BJ (cell line): ENCODE measurements at regions of chr3 and their contacts with region 1.

Region 1: DNA sequence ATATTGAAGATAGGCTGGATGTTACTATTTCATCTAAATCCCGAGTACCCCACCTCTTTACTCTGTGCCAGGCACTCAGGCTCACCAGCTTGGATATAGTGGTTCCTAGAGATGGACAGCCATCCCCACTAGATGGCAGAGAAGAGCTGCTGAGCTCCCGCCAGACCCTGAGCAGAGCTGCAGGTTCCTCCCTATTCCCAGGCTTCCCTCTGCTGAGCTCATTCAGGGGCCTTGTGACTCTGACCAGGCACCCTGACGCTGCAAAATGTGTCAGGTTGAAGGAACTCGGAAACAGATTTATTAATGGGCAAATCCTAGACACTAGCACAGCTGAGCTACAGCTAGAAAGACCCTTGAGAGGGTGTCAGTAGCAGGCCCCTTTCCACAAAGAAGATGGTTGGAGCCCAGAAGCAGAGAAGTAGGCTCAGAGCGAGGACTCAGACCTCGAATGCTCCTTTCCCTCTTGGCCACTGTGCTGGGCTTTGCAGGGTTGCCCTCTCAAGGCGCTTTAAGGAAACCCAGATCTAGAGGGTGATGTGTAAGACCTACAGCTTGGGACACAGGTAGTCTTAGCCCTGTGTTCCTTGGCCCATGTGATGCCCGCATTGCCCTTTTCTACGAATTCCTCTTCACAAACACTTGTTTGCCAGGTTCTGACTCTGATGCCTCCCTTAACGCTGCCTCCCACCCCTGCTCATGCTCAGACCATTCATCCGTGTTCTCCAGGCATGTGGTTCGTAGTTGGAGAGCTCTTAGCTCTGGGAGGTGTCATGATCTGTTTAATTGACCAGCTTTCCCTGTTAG is 38.0 kb upstream of the RHO start:
- DNase-seq: peak; percentile 74
- H3K4me3 ChIP-seq: no peak overlapping the region
- H3K27me3 ChIP-seq: no peaks in the 10 kb centered on the region
- CTCF ChIP-seq: peak; percentile 92

Region 2: GRCh38 chr3:129560901-129561594 is 70.6 kb after region 1 on chr3:
- CTCF ChIA-PET with region 1: interaction called, 12 read pairs
- POLR2A ChIA-PET with region 1: no interaction called
- DNase-seq: peak; percentile 68
- H3K4me3 ChIP-seq: peak overlapping the region; percentile 29
- H3K27me3 ChIP-seq: no peaks in the 10 kb centered on the region
- CTCF ChIP-seq: no peak

Region 3: DNA sequence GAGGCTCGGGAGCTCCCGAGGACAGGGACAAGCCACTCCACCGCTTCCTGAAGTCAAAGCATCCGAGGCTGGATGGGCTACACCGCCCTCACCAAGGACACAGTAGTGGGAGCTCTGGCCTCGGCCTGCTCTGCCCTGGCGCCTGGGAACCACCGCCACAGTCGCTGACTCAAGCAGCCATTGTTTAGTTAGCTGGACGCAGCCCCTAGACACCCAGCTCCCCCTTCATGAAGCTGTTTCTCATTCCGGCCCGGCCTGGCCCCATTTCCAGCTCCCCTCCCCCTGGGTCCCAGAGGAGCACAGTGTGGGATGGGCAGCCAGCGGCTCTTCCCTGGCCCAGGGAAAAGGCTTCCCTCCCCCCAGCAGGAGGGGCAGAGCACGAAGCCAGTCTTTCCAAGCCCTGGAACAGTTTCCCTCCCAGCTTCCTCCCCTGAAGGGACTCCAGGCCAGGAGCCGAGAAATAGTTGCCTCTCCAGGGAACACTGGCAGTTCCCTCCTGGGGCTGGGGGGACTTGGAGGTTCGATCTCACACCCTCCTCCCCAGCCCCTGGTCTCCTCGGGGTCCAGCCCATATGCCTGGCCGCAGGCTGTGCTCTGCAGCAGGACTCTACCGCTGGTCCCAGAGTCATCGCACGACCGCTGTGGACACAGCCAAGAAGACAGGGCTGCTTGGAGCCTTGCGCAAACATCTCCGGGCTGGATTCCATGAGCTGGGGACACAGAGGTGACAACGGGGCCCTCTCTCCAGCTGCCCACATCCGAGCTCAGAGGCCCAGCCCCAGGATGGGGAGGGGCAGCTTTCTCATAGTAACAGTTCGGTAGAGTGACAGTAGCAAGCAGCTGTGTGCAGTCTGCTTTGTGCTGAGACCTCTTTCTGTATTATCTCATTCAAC is 106.0 kb after region 1 on chr3:
- CTCF ChIA-PET with region 1: interaction called, 24 read pairs
- POLR2A ChIA-PET with region 1: interaction called, 3 read pairs
- DNase-seq: peak; percentile 88
- H3K4me3 ChIP-seq: peak overlapping the region; percentile 20; the same call in 1 of the 2 replicates
- H3K27me3 ChIP-seq: no peaks in the 10 kb centered on the region
- CTCF ChIP-seq: peak; percentile 6; the same call in 1 of the 2 replicates

Region 4: DNA sequence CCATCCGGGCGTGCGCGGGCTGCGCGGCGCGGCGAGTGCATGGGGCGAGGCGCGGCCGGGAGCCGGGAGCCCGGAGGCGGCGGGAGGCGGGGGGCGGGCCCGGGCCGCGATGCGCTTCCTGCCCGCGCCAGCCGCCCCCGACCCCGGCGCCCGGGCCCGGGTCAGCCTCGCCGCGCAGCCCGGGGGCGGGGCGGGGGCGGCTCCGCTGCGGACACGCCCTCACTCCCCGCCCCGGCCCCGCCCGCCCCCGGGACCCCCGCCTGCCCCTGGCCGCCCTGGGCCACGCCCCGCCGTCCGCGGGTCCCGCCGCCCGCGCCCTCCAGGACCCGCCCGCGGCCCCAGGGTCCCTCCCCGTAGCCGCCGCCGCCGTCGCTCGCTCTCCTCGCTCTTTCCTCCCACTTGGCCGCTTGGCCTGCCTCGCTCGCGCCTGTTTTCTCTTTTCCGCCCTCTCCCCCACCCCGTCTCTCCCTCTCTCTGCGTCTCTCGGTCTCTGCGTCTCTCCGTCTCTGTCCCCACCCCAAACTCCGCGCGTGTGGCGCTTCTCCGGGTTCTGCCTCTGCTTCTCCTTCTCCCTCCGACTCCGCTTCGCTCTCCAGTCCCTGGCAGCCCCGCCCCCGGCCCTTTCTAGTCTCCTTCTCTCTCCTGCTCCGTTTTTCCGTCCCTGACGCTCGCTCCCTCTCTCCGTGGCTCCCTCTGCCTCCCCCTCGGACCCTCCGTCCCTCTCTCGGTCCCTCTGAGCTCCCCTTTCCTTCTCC is 116.4 kb after region 1 on chr3 and contains the start of gene PLXND1:
- CTCF ChIA-PET with region 1: interaction called, 15 read pairs
- POLR2A ChIA-PET with region 1: no interaction called
- DNase-seq: no peak
- H3K4me3 ChIP-seq: peak within 1 kb of the TSS; percentile 70
- H3K27me3 ChIP-seq: no peaks in the 10 kb centered on the region
- CTCF ChIP-seq: no peak
- polyA plus RNA-seq, gene PLXND1: 84.6 and 128 TPM in 2 replicates

Region 5: DNA sequence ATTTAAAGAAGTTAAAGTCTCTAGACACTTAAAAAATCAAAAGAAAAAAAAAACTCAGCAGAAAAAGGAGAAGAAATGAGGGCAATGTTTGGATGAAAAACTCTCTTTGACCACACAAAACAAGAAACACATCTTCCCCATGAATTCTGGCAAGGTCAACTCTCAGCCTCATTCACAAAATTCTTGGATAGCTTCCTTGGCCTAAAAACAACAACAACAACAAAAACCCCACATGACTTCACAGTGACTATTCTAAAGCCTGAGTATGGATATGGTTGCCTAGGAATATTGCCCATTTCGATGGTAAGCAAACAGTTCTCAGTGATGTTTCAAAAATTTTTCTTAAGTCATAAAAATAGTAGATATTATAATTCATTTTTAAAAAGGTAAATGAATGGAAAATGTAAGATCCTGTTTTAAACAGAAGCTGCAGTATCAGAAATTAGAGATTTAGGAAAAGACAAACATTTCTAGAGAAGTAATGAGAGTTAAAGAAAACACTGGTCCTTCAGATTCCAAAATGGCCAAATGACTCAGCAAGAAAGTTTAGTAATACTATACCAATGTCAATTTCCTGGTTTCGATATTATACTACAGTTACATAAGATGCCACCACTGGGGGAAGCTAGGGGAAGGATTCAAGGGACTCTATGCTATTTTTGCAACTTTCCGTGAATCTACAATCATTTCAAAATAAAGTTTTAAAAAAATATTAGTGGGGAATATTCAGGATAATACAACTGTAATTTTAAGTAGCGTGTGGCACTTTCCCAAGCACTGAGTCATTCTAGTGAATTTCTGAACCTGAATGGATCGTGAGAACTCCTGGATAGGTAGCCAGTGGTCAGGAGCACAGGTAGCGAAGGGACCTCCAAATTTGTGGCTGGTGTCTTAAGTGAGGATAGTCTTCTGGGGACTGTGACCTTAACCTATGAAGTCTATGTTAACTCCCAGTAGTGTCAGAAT is 365.3 kb after region 1 on chr3:
- CTCF ChIA-PET with region 1: no interaction called
- POLR2A ChIA-PET with region 1: no interaction called
- DNase-seq: peak; percentile 41
- H3K4me3 ChIP-seq: no peak overlapping the region
- H3K27me3 ChIP-seq: no peaks in the 10 kb centered on the region
- CTCF ChIP-seq: no peak

Region 6: DNA sequence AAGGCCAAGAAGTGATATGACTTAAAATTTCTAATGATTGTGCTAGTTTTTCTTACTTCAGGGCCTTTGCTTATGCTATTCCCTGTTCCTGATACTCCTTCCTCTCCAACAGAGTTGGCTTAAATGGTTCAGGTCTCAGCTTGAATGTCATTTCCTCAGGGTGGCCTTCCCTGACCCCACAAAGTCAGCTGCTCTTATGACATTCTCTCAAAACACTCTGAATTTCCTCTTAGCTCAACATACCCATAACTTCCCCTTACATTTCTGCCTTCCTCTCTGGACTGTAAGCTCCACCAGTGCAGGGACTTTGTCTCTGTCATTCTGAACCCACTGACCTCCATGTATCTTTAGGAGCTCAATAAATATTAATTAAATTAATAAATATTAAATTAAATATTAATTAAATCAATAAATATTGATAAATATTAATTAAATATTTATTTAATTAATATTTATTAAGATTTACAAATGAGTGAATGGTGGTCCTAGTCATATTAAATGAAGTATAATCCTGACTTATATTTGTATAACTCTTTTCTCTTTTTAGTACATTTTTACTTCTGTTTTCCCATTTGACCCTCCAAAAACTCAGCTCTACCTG is 420.9 kb after region 1 on chr3:
- CTCF ChIA-PET with region 1: no interaction called
- POLR2A ChIA-PET with region 1: no interaction called
- DNase-seq: no peak
- H3K4me3 ChIP-seq: no peak overlapping the region
- H3K27me3 ChIP-seq: no peaks in the 10 kb centered on the region
- CTCF ChIP-seq: no peak